A673 (cell line): ENCODE measurements at regions of chr2 and their contacts with region 1.

Region 1: DNA sequence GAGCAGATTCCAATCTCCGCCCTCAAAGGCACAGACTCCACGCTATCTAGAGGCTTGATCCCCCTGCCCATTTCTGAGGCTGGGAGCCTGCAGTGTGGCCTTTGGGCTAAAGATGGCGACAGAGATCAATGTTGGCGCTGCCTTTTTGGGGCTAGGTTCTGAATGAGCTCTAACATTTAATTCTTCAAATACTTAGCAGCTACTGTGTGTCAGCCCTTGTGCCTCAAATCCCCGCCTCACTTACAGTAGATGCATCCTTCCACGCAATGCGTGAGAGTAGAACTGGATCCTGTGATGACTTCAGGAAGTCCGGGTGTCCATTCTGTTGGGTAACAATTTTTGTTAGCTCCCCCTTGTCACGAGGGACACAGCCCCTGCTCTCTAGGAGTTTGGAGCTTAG is 12.4 kb downstream of the IL1F10 start:
- DNase-seq: peak; percentile 59
- H3K4me3 ChIP-seq: no peak overlapping the region
- H3K27ac ChIP-seq: no peak overlapping the region
- H3K4me1 ChIP-seq: no peaks in the 10 kb centered on the region
- H3K27me3 ChIP-seq: peaks cover 2% of the 10 kb centered on the region
- CTCF ChIP-seq: peak; percentile 83

Region 2: DNA sequence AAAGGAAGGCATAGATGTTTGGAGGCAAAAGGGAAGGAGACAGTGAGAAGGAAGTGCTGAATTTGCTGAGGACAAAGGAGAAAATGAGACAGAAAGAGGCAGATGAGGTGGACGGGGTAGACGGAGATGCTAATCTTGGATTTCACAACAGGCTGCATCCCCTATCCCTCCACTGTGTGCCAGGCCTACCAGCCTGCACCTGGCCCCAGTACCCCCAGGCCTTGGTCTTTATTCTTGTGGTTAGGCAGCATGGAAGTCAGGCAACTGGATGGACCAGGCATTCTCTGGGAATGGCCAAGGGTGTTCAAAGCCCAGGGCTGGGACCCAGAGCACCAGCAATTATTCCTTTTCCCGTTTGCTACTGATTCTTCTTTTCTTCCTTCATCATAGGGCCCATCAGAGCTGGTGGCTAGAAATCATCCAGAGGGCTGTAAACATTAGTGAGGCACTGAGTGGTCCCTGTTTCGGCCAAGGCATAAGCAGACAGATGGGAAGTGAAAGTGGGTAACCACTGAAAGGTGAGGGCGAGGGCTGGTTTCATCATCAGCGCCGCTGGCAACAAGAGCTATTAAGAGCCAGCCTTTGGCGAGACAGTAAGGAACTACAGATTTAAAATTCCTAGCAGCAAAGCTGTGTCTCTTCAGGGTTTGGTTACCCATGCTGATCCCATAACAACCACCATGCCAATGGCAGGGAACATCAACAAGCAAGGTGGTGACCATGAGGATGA is 443.7 kb before region 1 on chr2:
- CTCF ChIA-PET with region 1: no interaction called
- POLR2A ChIA-PET with region 1: no interaction called
- intact Hi-C with region 1: no loop called
- DNase-seq: no peak
- H3K4me3 ChIP-seq: no peak overlapping the region
- H3K27ac ChIP-seq: no peak overlapping the region
- H3K4me1 ChIP-seq: peaks cover under 1% of the 10 kb centered on the region
- H3K27me3 ChIP-seq: no peaks in the 10 kb centered on the region
- CTCF ChIP-seq: no peak

Region 3: DNA sequence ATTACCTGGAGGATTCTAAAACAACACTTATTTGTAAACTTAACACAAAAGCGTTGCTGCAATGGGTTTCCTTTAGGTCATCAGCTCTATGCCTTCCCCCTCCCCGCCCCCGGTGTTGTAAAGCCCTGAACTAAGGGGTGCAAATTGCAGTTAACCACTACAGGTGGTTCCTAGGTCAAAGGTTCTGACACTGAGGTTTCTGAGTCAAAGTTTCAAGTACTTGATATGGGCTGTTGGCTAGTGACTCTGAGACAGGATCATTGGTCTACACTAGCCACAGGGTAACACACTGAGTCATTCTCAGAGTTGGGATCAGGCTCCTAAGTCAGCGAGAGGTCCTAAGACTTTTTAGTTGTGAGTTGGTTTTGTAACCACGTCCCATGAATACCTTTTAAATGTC is 259.0 kb before region 1 on chr2:
- CTCF ChIA-PET with region 1: no interaction called
- POLR2A ChIA-PET with region 1: no interaction called
- intact Hi-C with region 1: no loop called
- DNase-seq: no peak
- H3K4me3 ChIP-seq: no peak overlapping the region
- H3K27ac ChIP-seq: no peak overlapping the region
- H3K4me1 ChIP-seq: no peaks in the 10 kb centered on the region
- H3K27me3 ChIP-seq: no peaks in the 10 kb centered on the region
- CTCF ChIP-seq: no peak

Region 4: DNA sequence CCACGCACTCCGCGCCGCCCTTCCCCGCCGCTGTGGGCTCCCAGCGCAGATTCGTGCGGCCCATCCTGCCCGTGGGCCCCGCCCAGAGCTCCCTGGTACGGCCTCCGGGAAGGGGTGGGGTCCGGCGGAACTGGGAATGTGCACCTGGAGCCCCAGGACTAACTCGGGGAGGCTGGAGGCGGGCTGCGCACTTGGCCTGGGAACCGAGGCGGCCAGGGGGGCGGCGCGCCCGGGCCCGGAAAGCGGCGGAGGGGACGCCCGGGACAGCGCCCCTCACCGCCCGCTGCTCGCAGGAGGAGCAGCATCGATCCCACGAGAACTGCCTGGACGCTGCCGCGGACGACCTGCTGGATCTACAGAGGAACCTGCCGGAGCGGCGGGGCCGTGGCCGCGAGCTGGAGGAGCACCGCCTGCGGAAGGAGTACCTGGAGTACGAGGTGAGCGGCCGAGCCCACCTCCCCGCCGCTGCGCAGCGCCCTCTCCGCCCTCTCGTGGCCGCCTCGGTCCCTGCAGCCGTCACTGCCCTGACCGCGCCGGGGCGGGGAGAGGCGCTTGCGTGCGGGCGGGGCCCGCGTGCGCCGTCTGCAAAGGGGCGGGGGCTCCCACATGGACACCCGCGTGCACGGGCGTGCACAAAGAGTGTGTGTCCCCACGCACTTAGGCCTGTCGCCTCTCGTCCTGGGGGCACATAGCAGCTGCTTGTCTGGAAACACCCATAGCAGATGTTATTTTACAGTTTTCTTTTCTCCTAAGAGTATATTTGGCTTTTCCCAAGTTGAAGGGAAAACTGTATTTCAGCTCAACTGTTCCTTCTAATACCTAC is 118.9 kb after region 1 on chr2:
- CTCF ChIA-PET with region 1: interaction called, 16 read pairs
- POLR2A ChIA-PET with region 1: no interaction called
- intact Hi-C with region 1: loop called (anchors 2 kb)
- DNase-seq: peak; percentile 89
- H3K4me3 ChIP-seq: peak overlapping the region; percentile 89
- H3K27ac ChIP-seq: peak overlapping the region; percentile 52
- H3K4me1 ChIP-seq: peaks cover 13% of the 10 kb centered on the region
- H3K27me3 ChIP-seq: no peaks in the 10 kb centered on the region
- CTCF ChIP-seq: peak; percentile 84

Region 5: GRCh38 chr2:114517580-114517979 is 1437.4 kb after region 1 on chr2:
- CTCF ChIA-PET with region 1: interaction called, 10 read pairs
- POLR2A ChIA-PET with region 1: no interaction called
- intact Hi-C with region 1: no loop called
- DNase-seq: no peak
- H3K4me3 ChIP-seq: no peak overlapping the region
- H3K27ac ChIP-seq: no peak overlapping the region
- H3K4me1 ChIP-seq: no peaks in the 10 kb centered on the region
- H3K27me3 ChIP-seq: no peaks in the 10 kb centered on the region
- CTCF ChIP-seq: no peak